ENCODE measurements at regions of chr1 and their contacts with region 1.

Region 1: DNA sequence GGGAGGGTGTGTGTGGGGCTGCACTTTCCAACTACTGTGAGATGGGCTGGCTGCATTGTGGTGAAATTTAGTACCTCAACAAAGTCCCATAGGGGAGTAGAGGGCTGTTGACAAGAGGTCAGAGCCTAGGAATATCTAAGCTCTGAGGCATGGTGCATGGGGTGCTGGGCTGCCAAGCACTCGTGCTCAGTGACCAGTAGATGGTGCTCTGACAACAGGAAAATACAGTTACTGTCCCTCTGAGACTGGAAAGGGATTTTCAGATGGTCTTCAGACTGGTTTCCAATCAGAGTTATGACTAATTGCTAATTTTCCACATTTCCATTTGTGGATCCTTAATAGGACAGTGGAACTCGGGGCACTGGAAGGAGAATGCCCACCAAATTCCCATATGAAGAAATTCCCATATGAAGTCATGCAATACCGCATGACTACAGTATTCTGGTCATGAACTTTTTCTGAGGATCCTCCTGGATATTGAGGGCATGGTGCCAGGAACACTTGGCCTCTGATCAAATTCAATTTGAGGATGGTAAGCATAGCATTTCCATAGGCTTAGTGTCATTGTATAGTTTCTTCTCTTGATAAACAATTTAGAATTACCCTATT is 4.1 kb upstream of the CACNA1E start:
- DNase-seq: peak; percentile 79

Region 2: DNA sequence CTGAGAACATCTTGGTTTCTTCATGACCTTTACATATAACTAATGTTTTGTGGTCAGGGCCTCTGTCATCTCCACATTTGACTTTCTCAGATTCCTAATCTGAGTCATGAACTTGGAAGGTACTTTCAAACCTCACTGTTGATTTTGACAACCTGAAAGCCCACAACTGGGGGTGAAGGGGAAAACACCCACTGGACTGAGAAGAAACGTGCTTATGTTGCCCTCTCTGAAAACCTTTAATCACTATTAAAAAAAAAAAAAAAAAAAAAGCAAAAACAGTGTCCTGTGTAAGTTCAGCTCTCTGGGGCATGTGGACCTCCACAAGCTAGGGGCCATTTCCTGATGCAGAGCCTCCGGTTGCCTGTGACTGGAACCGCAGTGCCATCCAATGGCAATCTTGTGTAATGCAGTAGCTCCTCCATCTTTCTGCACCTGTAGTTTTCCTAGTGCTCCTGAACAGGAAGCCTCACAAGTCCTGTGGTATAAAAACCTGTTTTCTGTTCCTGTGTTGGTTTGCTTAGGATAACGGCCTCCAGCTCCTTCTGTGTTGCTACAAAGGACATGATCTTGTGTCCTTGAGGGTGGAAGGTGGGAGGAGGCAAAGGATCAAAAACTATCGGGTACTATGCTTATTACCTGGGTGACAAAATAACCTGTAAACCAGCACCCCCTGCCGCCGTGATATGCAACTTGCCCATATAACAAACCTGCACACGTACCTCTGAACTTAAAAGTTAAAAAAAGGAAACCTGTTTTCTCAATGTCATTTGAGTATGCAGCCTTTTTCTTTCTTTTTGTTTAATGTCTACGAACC is 457.7 kb after region 1 on chr1:
- CTCF ChIA-PET with region 1: interaction called, 19 read pairs
- POLR2A ChIA-PET with region 1: no interaction called
- DNase-seq: peak; percentile 83